Heart left ventricle (tissue), 16 donors: ENCODE measurements at regions of chr6 and their contacts with region 1.

Region 1: GRCh38 chr6:55276745-55277530 is 50.3 kb upstream of the GFRAL start:
- DNase-seq: peak in 4 of 5 donors; percentile 25 to 51 (median 34)
- ATAC-seq: peak; percentile 50 to 92 (median 58)
- H3K4me3 ChIP-seq: peak overlapping the region in 7 of 12 donors; percentile 13 to 39 (median 22)
- H3K27ac ChIP-seq: peak overlapping the region in 5 of 12 donors; percentile 4 to 50 (median 41)
- H3K4me1 ChIP-seq: peaks cover 0 to 6% (median 0%) of the 10 kb centered on the region in 12 donors
- H3K27me3 ChIP-seq: no peaks in the 10 kb centered on the region
- CTCF ChIP-seq: peak; percentile 36 to 68 (median 54)
- POLR2A ChIP-seq: no peak

Region 2: DNA sequence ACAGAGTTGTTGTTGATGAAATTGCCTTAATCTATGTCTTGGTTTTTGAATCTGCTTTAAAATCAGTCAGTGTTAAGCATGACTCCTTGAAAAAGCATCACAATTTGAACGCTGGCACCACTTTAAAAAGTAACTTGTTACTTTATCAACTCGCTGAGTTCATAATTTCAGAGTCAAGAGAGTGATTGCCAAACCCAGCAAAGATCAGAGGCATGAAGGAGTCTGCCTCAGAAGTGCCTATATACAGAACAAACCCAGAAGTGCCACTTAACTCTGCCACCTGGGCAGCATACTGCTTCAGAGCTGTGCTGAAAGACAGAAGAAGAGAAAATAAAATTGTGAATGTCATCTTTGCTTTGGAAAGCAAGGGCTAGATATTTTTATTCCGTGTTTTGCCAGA is 176.3 kb before region 1 on chr6:
- intact Hi-C with region 1: no loop called
- DNase-seq: no peak
- ATAC-seq: no peak
- H3K4me3 ChIP-seq: no peak overlapping the region
- H3K27ac ChIP-seq: no peak overlapping the region
- H3K4me1 ChIP-seq: no peaks in the 10 kb centered on the region
- H3K27me3 ChIP-seq: no peaks in the 10 kb centered on the region
- CTCF ChIP-seq: no peak
- POLR2A ChIP-seq: no peak

Region 3: DNA sequence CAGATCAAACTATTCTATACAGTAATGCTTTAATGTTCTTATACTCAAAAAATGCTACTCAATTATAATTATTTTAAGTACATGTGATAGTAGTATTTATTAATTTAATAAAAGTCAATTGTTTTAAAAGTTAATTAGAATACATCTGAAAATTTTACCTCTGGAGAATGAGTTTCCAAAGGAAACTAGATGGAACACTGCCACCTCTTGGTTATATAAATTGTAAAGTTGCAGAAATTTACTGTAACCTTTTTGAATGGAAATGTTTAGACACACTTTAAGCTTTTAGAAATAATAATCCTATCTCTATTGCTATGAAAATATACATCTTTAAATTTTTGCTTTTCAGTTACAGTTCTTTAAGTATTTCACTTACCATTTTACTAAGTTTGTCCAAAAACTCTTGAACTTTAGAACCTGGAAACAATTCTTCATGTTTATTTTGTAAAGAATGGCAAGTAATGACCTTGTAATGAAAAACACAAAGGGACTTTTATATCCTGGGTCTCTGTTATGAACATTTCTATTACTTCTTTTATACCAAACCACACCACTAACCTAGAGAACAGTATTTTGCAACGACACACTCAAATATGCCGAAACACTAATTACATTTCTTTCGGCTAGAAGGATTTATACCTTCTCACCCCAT is 609.4 kb after region 1 on chr6:
- intact Hi-C with region 1: loop called in 2 of 10 experiments (anchors 2 to 5 kb)
- DNase-seq: no peak
- ATAC-seq: no peak
- H3K4me3 ChIP-seq: no peak overlapping the region
- H3K27ac ChIP-seq: no peak overlapping the region
- H3K4me1 ChIP-seq: peaks cover 0 to 5% (median 0%) of the 10 kb centered on the region in 12 donors
- H3K27me3 ChIP-seq: no peaks in the 10 kb centered on the region
- CTCF ChIP-seq: peak in 11 of 12 donors; percentile 19 to 61 (median 40)
- POLR2A ChIP-seq: no peak

Region 4: DNA sequence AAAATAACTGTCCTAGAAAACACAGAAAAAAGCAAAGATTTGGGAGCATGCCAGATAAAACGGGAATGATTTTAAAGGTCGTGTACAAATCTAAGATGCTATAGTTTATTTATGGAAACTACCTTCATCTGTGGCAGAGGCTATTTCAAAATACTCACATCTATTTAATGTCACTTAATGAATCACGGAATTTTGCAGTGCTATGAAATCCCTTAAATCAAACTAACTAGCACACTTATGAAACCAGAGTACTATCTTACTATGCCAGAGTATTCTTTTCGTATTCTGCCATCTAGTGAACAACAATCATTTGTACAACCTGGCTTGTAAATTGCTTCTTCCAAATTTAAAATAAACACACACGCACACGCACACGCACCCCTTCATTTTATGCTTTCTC is 676.4 kb after region 1 on chr6:
- intact Hi-C with region 1: loop called (anchors 2 to 10 kb)
- DNase-seq: no peak
- ATAC-seq: peak in 3 of 4 donors; percentile 33 to 67 (median 45)
- H3K4me3 ChIP-seq: peak overlapping the region in 9 of 12 donors; percentile 14 to 50 (median 26)
- H3K27ac ChIP-seq: no peak overlapping the region
- H3K4me1 ChIP-seq: peaks cover 0 to 6% (median 0%) of the 10 kb centered on the region in 12 donors
- H3K27me3 ChIP-seq: no peaks in the 10 kb centered on the region
- CTCF ChIP-seq: peak in 11 of 12 donors; percentile 11 to 58 (median 45)
- POLR2A ChIP-seq: no peak

Region 5: GRCh38 chr6:56279346-56280080 is 1002.6 kb after region 1 on chr6:
- intact Hi-C with region 1: loop called in 1 of 10 experiments (anchors 10 kb)
- DNase-seq: no peak
- ATAC-seq: no peak
- H3K4me3 ChIP-seq: no peak overlapping the region
- H3K27ac ChIP-seq: no peak overlapping the region
- H3K4me1 ChIP-seq: no peaks in the 10 kb centered on the region
- H3K27me3 ChIP-seq: no peaks in the 10 kb centered on the region
- CTCF ChIP-seq: no peak
- POLR2A ChIP-seq: no peak

Region 6: DNA sequence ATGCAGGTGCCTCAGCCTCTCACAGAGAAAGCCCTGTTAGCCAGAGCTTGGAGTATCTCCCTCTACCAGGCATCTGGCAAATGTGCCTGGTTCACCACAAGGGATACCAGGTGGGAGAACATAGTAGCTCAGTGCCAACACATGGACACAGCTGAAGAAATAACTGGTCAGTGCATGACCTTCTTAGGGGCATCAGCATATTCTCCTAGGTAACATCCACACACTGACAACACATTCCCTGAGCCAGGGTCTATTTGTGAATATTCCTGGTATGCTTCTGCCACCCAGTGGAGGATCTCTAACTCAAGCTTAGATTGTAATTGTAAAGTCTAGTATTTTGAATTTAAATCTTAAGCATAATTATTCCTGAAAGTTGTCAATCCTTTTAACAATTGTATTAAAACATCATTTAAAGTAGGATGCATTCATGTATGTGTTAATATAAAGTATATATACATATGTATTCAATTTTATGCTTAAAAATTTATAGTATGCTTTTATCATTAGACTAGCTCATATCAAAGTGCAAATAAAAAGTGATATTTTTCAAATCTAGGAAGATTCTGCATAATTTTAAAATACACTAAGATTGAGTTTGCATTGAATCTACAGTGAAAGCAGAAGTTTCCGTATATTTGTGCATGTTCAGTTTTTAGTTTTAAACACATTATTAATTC is 1015.7 kb after region 1 on chr6:
- intact Hi-C with region 1: loop called in 7 of 10 experiments (anchors 2 to 10 kb)
- DNase-seq: peak in 2 of 5 donors; percentile 19 to 41
- ATAC-seq: peak; percentile 83 to 93 (median 90)
- H3K4me3 ChIP-seq: no peak overlapping the region
- H3K27ac ChIP-seq: no peak overlapping the region
- H3K4me1 ChIP-seq: peaks cover 0 to 7% (median 3%) of the 10 kb centered on the region in 12 donors
- H3K27me3 ChIP-seq: no peaks in the 10 kb centered on the region
- CTCF ChIP-seq: peak; percentile 38 to 77 (median 67)
- POLR2A ChIP-seq: no peak